ENCODE measurements at regions of chr12 and their contacts with region 1.

Region 1: GRCh38 chr12:124053851-124054250 is 80.8 kb downstream of the ZNF664 start:
- DNase-seq: peak in 4 of 5 donors; percentile 50 to 62 (median 58)
- ATAC-seq: peak; percentile 79 to 94 (median 88)
- H3K4me3 ChIP-seq: no peak overlapping the region
- H3K27ac ChIP-seq: no peak overlapping the region
- H3K4me1 ChIP-seq: peaks cover 0 to 17% (median 5%) of the 10 kb centered on the region in 12 donors
- H3K27me3 ChIP-seq: no peaks in the 10 kb centered on the region
- CTCF ChIP-seq: peak; percentile 39 to 82 (median 72)
- POLR2A ChIP-seq: no peak

Region 2: GRCh38 chr12:124441443-124442194 is 387.8 kb after region 1 on chr12:
- intact Hi-C with region 1: loop called in 1 of 10 experiments (anchors 10 kb)
- DNase-seq: no peak
- ATAC-seq: peak in 1 of 4 donors; percentile 32
- H3K4me3 ChIP-seq: no peak overlapping the region
- H3K27ac ChIP-seq: peak overlapping the region in 10 of 12 donors; percentile 11 to 79 (median 47)
- H3K4me1 ChIP-seq: peaks cover 4 to 52% (median 36%) of the 10 kb centered on the region in 12 donors
- H3K27me3 ChIP-seq: no peaks in the 10 kb centered on the region
- CTCF ChIP-seq: no peak
- POLR2A ChIP-seq: no peak

Measured in heart left ventricle (tissue), 16 donors.